CD8-positive, alpha-beta memory T cell (primary cell): ENCODE measurements at regions of chr11 and their contacts with region 1.

Region 1: DNA sequence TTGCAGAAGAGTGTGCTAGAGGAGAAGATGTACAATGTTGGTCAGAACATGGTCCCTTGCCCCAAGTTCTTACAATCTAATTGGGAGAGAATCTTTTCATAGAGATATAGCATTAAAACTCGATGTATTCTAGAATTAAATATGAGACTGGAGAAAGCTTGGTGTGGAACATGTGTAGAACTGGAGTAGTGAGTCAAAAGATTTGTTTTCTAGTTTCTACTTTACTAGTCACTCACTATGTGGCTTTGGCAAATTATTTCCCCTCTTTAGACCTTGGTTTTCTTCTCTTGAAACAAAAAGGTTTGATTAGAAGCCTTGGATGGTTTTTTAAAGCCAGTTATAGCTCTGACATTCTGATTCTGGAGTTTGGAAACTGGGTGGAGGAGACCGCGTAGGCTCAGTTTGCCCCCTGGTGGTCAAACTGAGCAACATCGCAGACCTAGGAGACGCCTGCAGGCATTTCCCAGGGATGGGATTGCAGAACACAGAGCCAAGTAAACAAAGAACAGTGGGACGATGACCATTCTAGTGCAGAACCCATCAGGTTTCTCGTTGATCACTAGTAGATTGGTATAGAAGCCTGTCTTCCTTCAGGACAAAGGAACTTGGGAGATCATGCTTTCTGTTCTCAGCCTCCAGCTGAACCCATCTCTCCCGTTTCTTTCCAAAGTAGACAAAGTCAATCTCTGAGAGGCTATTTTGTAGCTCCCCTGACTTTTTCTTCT is 8.5 kb upstream of the CHRDL2 start:
- DNase-seq: peak; percentile 20 to 64 (median 34)
- H3K4me3 ChIP-seq: no peak overlapping the region
- H3K4me3 Mint-ChIP-seq: no peak overlapping the region
- H3K27ac ChIP-seq: no peak overlapping the region
- H3K27ac Mint-ChIP-seq: no peak overlapping the region
- H3K4me1 ChIP-seq: no peaks in the 10 kb centered on the region
- H3K4me1 Mint-ChIP-seq: peaks cover 3 to 22% (median 10%) of the 10 kb centered on the region in 3 donors
- H3K27me3 ChIP-seq: no peaks in the 10 kb centered on the region
- H3K27me3 Mint-ChIP-seq: peaks cover 15 to 37% of the 10 kb centered on the region in 2 donors

Region 2: DNA sequence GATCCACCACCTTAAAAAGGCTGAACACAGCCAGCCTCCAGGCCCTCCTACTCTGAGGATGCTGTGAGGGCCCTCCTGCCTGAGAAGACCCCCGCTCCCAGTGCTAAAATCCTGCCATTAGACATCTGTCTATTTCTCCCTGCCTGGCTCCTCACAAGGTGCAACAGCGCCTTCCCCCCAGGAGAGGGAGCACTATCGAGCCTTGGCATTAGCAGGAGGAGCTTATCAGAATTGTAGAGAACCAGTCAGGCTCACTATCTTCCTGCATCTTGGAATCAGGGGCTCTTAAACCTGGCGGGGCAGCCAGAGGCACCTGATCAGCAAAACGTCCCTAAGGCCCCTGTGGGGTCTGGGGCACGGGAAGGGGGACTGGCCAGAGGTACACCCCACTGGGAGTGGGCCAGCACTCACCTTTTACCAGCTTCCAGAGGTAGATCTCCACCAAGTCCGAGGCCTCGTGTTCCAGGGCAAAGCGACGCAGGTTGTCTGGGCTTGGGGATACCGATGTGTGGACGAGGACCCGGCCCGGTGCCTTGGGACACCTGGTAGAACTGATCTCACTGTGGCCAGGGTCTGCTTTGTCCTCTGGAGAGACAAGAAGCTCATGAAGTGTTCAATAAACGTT is 37.2 kb before region 1 on chr11:
- CTCF ChIA-PET with region 1: interaction called, 22 read pairs
- POLR2A ChIA-PET with region 1: no interaction called
- DNase-seq: peak; percentile 30 to 73 (median 38)
- H3K4me3 ChIP-seq: no peak overlapping the region
- H3K4me3 Mint-ChIP-seq: no peak overlapping the region
- H3K27ac ChIP-seq: no peak overlapping the region
- H3K27ac Mint-ChIP-seq: no peak overlapping the region
- H3K4me1 ChIP-seq: no peaks in the 10 kb centered on the region
- H3K4me1 Mint-ChIP-seq: peaks cover 0 to 6% (median 0%) of the 10 kb centered on the region in 3 donors
- H3K27me3 ChIP-seq: no peaks in the 10 kb centered on the region
- H3K27me3 Mint-ChIP-seq: peaks cover 0 to 3% of the 10 kb centered on the region in 2 donors

Region 3: GRCh38 chr11:74726547-74727182 is 13.0 kb before region 1 on chr11:
- CTCF ChIA-PET with region 1: interaction called, 12 read pairs
- POLR2A ChIA-PET with region 1: no interaction called
- DNase-seq: peak; percentile 26 to 68 (median 32)
- H3K4me3 ChIP-seq: no peak overlapping the region
- H3K4me3 Mint-ChIP-seq: no peak overlapping the region
- H3K27ac ChIP-seq: no peak overlapping the region
- H3K27ac Mint-ChIP-seq: peak overlapping the region in 1 of 8 donors; percentile 23
- H3K4me1 ChIP-seq: peaks cover 3% of the 10 kb centered on the region
- H3K4me1 Mint-ChIP-seq: peaks cover 0 to 20% (median 3%) of the 10 kb centered on the region in 3 donors
- H3K27me3 ChIP-seq: peaks cover 9% of the 10 kb centered on the region
- H3K27me3 Mint-ChIP-seq: peaks cover 18 to 31% of the 10 kb centered on the region in 2 donors

Region 4: DNA sequence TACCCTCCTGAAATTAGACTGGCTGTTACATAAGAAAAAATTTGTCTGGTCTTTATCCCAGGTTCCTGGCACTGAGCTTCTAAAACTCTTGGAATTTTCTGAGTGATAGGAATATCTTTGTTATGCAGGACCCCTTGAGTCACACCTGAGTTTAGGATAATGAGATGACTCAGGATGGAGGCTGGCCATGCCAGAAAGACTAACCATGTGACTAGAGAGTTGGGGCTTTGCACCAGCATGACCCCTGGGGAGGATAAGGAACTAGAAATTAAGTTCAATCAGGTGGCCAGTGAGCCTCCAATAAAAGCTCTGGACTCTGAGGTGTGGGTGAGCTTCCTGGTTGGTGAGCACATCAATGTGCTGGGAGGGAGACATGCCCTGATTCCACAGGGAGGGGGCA is 121.0 kb after region 1 on chr11:
- CTCF ChIA-PET with region 1: no interaction called
- POLR2A ChIA-PET with region 1: no interaction called
- DNase-seq: no peak
- H3K4me3 ChIP-seq: no peak overlapping the region
- H3K4me3 Mint-ChIP-seq: no peak overlapping the region
- H3K27ac ChIP-seq: no peak overlapping the region
- H3K27ac Mint-ChIP-seq: no peak overlapping the region
- H3K4me1 ChIP-seq: no peaks in the 10 kb centered on the region
- H3K4me1 Mint-ChIP-seq: peaks cover 0 to 15% (median 11%) of the 10 kb centered on the region in 3 donors
- H3K27me3 ChIP-seq: no peaks in the 10 kb centered on the region
- H3K27me3 Mint-ChIP-seq: no peaks in the 10 kb centered on the region